ENCODE measurements at regions of chr1 and their contacts with region 1.

Region 1: DNA sequence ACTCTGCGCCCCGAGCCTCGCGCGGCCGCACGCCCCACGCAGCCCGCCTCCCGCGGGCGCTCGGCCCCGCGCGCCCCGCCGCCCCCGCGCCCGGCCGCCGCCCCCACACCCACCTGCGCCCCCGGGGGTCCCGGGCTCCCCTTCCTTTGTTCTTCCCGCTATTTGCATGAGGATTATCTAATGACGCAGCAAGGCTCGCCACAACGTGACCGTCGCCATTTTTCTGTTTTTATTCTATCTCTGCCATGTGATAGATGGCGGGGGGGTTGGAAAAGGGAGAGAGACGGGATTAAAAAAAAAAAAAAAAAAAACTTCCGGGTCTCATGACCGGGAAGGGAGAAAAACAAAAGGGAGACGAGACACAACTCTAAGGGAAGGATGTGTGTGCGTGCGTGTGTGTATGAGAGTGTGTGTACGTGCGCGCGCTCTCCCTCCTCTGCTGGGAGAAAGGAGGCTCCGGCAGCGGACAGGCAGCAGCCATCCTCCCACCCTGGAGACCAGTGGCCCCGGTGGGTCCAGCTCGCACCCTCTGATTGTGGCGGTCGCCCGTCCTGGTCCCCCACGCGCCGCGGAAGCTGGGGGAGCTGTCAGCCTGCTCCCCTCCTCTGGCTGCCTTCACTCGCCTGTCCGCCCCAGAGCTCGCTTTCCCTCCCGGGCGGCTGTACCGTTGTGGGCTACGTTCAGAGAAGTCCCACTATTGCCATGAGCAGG is 80.4 kb upstream of the AK4 start:
- DNase-seq: peak; percentile 32 to 71
- H3K4me3 ChIP-seq: peak overlapping the region; percentile 79
- H3K27ac ChIP-seq: peak overlapping the region; percentile 36; the same call in 1 of the 2 replicates
- H3K4me1 ChIP-seq: peaks cover 13% of the 10 kb centered on the region; the same call in 1 of the 2 replicates
- H3K27me3 ChIP-seq: no peaks in the 10 kb centered on the region
- CTCF ChIP-seq: no peak

Region 2: GRCh38 chr1:64686828-64687724 is 380.6 kb before region 1 on chr1:
- CTCF ChIA-PET with region 1: no interaction called
- POLR2A ChIA-PET with region 1: no interaction called
- intact Hi-C with region 1: loop called (anchors 10 kb)
- DNase-seq: peak; percentile 31 to 43
- H3K4me3 ChIP-seq: no peak overlapping the region
- H3K27ac ChIP-seq: no peak overlapping the region
- H3K4me1 ChIP-seq: no peaks in the 10 kb centered on the region; the same call in 1 of the 2 replicates
- H3K27me3 ChIP-seq: no peaks in the 10 kb centered on the region
- CTCF ChIP-seq: peak; percentile 88

Region 3: GRCh38 chr1:64701886-64702285 is 365.8 kb before region 1 on chr1:
- CTCF ChIA-PET with region 1: no interaction called
- POLR2A ChIA-PET with region 1: no interaction called
- intact Hi-C with region 1: no loop called
- DNase-seq: no peak
- H3K4me3 ChIP-seq: no peak overlapping the region
- H3K27ac ChIP-seq: no peak overlapping the region
- H3K4me1 ChIP-seq: no peaks in the 10 kb centered on the region
- H3K27me3 ChIP-seq: no peaks in the 10 kb centered on the region
- CTCF ChIP-seq: no peak

Region 4: DNA sequence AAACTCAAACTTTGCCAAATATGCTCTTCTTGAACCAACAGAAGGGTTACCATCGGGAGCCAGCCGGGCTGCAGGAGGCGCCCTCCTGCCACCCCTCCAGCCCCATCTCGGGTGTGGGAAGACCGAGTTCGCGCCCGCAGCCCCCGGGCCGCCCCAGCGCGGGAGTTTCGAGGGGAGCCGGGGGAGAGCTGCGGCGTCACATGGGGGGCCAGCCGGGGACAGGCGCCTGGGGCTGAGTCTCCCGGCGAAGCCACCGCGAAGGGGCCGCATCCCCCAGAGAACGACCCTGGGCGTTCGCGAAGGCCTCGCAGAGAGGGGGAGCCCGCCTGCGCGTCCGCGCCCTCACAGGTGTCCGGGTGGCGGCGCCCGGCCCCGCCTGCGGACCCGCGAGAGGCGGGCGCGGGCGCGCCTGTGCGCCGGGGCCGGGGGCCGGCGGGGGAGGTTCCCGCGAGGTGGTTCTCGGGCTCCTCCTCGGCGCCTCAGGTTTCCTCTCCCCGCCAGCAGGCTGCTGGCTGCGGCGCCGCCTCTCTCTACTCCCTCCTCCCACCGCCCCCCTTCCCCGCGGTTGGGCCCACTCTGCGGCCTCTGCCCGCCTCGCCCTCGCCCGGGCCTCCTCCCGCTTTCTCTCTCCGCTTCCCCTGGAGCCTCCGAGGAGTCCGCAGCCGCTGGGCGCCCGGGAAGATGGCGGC is 323.0 kb before region 1 on chr1 and contains the start of gene RAVER2:
- CTCF ChIA-PET with region 1: no interaction called
- POLR2A ChIA-PET with region 1: no interaction called
- intact Hi-C with region 1: loop called (anchors 5 kb)
- DNase-seq: peak; percentile 55 to 90
- H3K4me3 ChIP-seq: peak within 1 kb of the TSS; percentile 85
- H3K27ac ChIP-seq: peak within 1 kb of the TSS; percentile 50
- H3K4me1 ChIP-seq: peaks cover 21% of the 10 kb centered on the region; the same call in 1 of the 2 replicates
- H3K27me3 ChIP-seq: no peaks in the 10 kb centered on the region
- CTCF ChIP-seq: peak; percentile 62; the same call in 1 of the 2 replicates
- total RNA-seq, gene RAVER2: 12.4 and 13.1 TPM in 2 replicates

Region 5: GRCh38 chr1:64864018-64864940 is 203.4 kb before region 1 on chr1:
- CTCF ChIA-PET with region 1: no interaction called
- POLR2A ChIA-PET with region 1: no interaction called
- intact Hi-C with region 1: loop called (anchors 10 kb)
- DNase-seq: peak in 1 of 2 experiments; percentile 84
- H3K4me3 ChIP-seq: no peak overlapping the region
- H3K27ac ChIP-seq: peak overlapping the region; percentile 59
- H3K4me1 ChIP-seq: peaks cover 6% of the 10 kb centered on the region; the same call in 1 of the 2 replicates
- H3K27me3 ChIP-seq: no peaks in the 10 kb centered on the region
- CTCF ChIP-seq: no peak

Region 6: GRCh38 chr1:65148548-65149350 is 81.1 kb after region 1 on chr1:
- CTCF ChIA-PET with region 1: no interaction called
- POLR2A ChIA-PET with region 1: no interaction called
- intact Hi-C with region 1: loop called (anchors 5 kb)
- DNase-seq: peak in 1 of 2 experiments; percentile 28
- H3K4me3 ChIP-seq: peak overlapping the region; percentile 97
- H3K27ac ChIP-seq: no peak overlapping the region
- H3K4me1 ChIP-seq: peaks cover 9% of the 10 kb centered on the region
- H3K27me3 ChIP-seq: no peaks in the 10 kb centered on the region
- CTCF ChIP-seq: no peak

Region 7: DNA sequence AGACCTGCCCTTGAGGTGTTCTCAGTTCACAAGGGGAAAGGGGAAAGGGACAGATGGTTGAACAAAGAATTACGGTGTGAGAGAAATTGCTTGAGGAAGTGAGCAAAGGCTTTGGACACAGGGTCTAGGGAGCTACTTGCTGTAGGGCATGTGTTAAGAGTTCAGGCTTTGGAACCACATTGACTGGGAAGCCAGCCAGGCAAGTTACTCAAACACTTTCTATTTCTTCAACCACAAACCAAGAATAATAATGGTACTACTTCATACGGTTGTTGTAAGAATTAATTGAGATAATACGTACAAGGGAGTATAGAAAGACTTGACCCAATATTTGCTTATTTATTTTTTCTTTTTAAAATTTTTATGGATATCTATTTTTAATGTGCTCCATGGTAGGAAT is 106.9 kb after region 1 on chr1:
- CTCF ChIA-PET with region 1: interaction called, 10 read pairs
- POLR2A ChIA-PET with region 1: interaction called, 6 read pairs
- intact Hi-C with region 1: no loop called
- DNase-seq: peak; percentile 74 to 98
- H3K4me3 ChIP-seq: no peak overlapping the region
- H3K27ac ChIP-seq: peak overlapping the region; percentile 81
- H3K4me1 ChIP-seq: peaks cover 83% of the 10 kb centered on the region
- H3K27me3 ChIP-seq: no peaks in the 10 kb centered on the region
- CTCF ChIP-seq: no peak

Region 8: DNA sequence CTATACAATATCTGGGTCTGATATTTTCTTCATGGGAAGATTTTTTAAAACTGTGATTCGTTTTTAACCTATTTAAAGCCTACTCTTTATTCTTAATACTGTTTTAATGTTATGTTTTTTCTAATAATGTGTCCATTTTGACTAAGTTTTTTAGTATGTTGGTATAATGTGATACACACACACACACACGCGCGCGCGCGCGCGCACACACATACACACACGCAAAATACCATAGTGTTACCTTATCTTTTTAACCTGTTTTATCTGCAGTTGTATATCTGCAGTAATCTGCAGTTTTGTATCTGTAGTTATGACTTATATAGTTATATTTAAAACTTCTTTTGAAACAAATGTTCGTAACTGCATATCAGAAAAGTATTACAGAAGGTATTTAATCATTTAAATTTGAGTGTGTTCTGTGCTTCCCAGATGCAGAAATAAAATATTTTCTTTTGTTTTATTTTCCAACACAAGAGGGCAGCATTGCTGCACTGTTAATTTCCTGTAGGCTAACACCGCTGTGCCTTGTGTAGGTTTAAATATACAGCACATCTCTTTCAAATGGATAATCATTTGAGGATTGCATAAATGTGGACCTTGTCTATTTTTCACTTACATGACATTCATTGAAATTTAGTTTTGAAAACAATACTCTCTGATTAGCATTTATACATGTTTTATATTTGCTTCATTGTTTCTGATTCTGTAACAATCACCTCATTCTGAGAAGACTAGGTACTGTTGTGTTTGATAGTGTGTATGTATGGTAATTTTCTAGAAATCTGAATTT is 891.1 kb after region 1 on chr1:
- CTCF ChIA-PET with region 1: no interaction called
- POLR2A ChIA-PET with region 1: no interaction called
- intact Hi-C with region 1: loop called (anchors 10 kb)
- DNase-seq: no peak
- H3K4me3 ChIP-seq: no peak overlapping the region
- H3K27ac ChIP-seq: no peak overlapping the region
- H3K4me1 ChIP-seq: no peaks in the 10 kb centered on the region
- H3K27me3 ChIP-seq: no peaks in the 10 kb centered on the region
- CTCF ChIP-seq: peak; percentile 85